ENCODE measurements at regions of chr19 and their contacts with region 1.

Region 1: GRCh38 chr19:38683393-38684080 is 36.1 kb downstream of the ACTN4 start:
- DNase-seq: peak; percentile 79
- H3K4me3 Mint-ChIP-seq: peak overlapping the region; percentile 22
- H3K27ac Mint-ChIP-seq: peak overlapping the region; percentile 95
- H3K4me1 Mint-ChIP-seq: peaks cover 98% of the 10 kb centered on the region
- H3K27me3 Mint-ChIP-seq: no peaks in the 10 kb centered on the region

Region 2: DNA sequence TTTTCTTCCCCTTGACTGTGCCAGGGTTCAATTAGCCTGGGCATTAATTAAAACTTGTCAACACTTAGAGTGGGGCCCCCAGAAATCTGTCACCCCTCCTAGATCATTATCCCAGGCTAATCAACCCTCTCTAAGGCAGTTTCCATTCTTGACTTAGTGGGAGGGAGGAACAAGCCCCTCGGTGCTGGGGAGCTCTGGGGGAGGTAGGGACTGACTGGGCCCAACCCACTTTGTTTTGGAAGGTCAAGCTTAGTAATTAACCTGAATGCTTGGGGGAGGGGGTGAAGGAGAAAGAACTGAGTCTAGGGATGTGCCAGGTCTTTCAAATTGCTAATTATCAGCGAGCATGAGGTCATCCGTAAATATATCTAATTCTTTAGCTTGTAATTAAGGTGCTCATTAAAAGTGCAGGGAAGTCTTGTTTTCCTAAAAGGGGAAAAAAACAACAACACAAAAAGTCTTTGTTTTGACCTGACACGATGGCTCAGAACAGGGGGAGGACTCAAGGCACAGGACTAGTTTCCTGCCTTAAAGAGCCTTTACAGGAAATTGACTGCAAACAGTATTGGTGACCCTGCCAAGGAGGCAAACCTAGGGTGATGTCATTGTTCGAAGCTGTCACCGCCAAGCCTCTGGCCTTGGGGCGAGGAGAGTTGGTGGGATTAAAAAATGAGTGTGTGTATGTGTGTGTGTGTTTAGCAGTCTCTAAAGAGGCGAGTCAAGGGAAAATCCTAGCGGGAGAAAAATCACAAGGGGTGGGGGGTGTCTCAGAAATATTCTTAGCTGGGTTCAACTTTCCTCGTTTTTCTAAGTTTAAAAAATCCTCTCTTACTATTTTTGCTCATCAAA is 16.6 kb before region 1 on chr19:
- CTCF ChIA-PET with region 1: interaction called, 6 read pairs
- POLR2A ChIA-PET with region 1: interaction called, 34 read pairs
- DNase-seq: peak; percentile 68
- H3K4me3 Mint-ChIP-seq: peak overlapping the region; percentile 57
- H3K27ac Mint-ChIP-seq: peak overlapping the region; percentile 93
- H3K4me1 Mint-ChIP-seq: peaks cover 93% of the 10 kb centered on the region
- H3K27me3 Mint-ChIP-seq: no peaks in the 10 kb centered on the region

Region 3: DNA sequence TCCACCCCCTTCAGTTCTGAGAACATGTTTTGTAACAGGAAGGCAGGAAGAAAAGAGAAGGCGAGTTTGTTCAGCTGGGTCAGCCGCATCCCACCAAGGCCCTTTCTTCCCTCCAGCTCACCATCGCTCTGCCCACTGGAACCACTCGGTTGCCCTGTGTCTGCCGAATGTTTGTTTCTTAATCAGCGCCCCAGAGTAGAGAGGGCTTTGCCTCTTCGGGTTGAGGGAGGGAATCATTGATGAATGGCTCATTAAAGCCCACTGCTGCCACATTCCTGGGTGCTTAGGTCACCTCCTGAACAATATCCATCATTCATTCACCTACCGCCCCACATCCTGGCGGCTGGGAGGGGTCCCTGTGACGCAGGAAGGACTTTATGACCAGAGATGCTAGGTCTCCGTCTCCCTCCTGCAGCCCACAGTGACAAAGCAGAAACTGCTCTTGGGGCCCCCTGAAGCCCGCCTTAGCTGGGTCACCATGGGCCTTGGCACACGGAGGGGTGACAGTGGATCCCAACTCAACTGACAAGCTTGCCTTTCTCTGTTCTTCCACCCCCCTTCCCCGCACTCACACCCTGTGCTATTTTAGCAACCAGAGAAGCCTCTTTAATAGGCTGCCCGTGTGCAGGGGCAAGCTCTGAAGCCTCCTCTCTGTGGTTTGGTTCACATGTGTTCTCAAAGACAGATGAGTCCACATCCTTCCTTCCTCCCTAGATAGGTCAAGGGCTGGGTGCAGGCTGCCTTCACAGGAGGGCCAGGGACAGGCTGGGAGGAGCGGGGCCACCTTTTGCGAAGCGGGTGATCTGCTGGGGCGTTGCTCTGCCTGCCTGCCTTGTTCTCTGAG is 10.1 kb after region 1 on chr19:
- CTCF ChIA-PET with region 1: interaction called, 11 read pairs
- POLR2A ChIA-PET with region 1: interaction called, 12 read pairs
- DNase-seq: peak; percentile 74
- H3K4me3 Mint-ChIP-seq: peak overlapping the region; percentile 23
- H3K27ac Mint-ChIP-seq: peak overlapping the region; percentile 91
- H3K4me1 Mint-ChIP-seq: peaks cover 97% of the 10 kb centered on the region
- H3K27me3 Mint-ChIP-seq: no peaks in the 10 kb centered on the region

Region 4: DNA sequence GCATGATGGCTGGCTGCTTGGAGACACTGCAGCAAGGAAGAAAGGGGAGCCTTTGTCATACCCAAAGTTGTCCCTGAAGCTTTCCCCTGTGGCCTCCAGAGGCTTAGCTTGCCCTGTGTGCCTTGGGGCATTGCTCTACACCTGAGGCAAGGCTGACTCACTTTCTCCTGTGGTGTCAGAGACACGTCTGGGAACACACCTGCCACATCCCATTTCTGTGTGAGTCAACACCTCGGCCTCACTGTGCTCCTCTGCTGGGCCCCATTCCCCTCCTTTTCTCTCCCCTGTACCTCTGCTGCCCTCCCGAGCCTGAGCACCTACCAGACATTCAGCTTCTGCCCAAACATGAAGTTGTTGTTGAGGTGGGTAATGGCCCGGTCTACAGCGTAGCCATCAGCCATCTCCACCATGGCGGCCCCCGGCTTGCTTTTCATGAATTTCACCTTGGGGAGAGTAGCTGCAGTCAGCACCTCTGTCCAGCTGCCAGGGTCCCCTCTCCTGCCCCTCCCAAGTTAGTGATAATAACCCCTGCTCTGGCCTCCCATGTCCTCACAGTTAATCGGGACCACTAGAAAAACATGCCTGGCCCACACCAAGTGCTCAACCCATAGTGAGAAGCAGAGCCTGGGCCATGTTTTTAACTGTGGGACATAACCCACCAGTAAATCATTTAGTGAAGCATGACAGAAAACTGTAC is 155.2 kb after region 1 on chr19:
- CTCF ChIA-PET with region 1: no interaction called
- POLR2A ChIA-PET with region 1: no interaction called
- DNase-seq: peak; percentile 32
- H3K4me3 Mint-ChIP-seq: no peak overlapping the region
- H3K27ac Mint-ChIP-seq: peak overlapping the region; percentile 61
- H3K4me1 Mint-ChIP-seq: peaks cover 51% of the 10 kb centered on the region
- H3K27me3 Mint-ChIP-seq: no peaks in the 10 kb centered on the region

Measured in activated CD4-positive, alpha-beta memory T cell treated with anti-CD3 and anti-CD28 coated beads, Interleukin-2, amount 10 ng/mL, durations not matched to agents 7 days and 5 days (primary cell).